PC-3 (cell line): ENCODE measurements at regions of chr3 and their contacts with region 1.

Region 1: GRCh38 chr3:146827836-146828235 is 222.7 kb upstream of the PLSCR5 start:
- DNase-seq: no peak
- ATAC-seq: no peak
- H3K4me3 ChIP-seq: no peak overlapping the region
- H3K27ac ChIP-seq: no peak overlapping the region
- H3K4me1 ChIP-seq: peaks cover 5% of the 10 kb centered on the region; the same call in 1 of the 2 replicates
- H3K27me3 ChIP-seq: peaks cover 36% of the 10 kb centered on the region
- CTCF ChIP-seq: no peak

Region 2: GRCh38 chr3:146621723-146622122 is 206.1 kb before region 1 on chr3:
- CTCF ChIA-PET with region 1: no interaction called
- POLR2A ChIA-PET with region 1: no interaction called
- intact Hi-C with region 1: no loop called
- DNase-seq: no peak
- ATAC-seq: no peak
- H3K4me3 ChIP-seq: no peak overlapping the region
- H3K27ac ChIP-seq: no peak overlapping the region
- H3K4me1 ChIP-seq: no peaks in the 10 kb centered on the region
- H3K27me3 ChIP-seq: no peaks in the 10 kb centered on the region
- CTCF ChIP-seq: no peak

Region 3: GRCh38 chr3:146845361-146845760 is 17.5 kb after region 1 on chr3:
- CTCF ChIA-PET with region 1: no interaction called
- POLR2A ChIA-PET with region 1: no interaction called
- intact Hi-C with region 1: loop called (anchors 2 kb)
- DNase-seq: no peak
- ATAC-seq: no peak
- H3K4me3 ChIP-seq: no peak overlapping the region
- H3K27ac ChIP-seq: no peak overlapping the region
- H3K4me1 ChIP-seq: no peaks in the 10 kb centered on the region
- H3K27me3 ChIP-seq: peaks cover 72% of the 10 kb centered on the region
- CTCF ChIP-seq: no peak

Region 4: GRCh38 chr3:146895026-146895749 is 67.4 kb after region 1 on chr3:
- CTCF ChIA-PET with region 1: no interaction called
- POLR2A ChIA-PET with region 1: no interaction called
- intact Hi-C with region 1: no loop called
- DNase-seq: no peak
- ATAC-seq: no peak
- H3K4me3 ChIP-seq: no peak overlapping the region
- H3K27ac ChIP-seq: no peak overlapping the region
- H3K4me1 ChIP-seq: no peaks in the 10 kb centered on the region
- H3K27me3 ChIP-seq: peaks cover 28% of the 10 kb centered on the region
- CTCF ChIP-seq: no peak

Region 5: DNA sequence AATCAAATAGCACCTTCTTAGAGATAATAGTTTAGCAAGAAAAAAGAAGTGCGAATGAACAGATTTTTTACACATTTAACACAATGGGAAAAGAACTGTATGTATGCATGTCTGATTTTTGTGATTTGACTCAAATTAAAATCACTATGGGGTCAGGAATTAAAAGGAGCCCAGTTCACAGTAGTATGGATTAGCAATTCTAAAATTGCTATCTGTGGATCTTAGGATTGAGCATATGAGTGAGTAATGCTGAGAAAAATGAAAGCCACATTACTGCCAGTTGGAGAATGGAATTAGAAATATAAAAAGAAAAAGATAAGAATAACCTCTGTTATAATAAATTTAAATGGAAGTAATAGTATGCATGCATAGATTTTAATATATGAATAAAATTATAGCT is 164.1 kb after region 1 on chr3:
- CTCF ChIA-PET with region 1: no interaction called
- POLR2A ChIA-PET with region 1: no interaction called
- intact Hi-C with region 1: no loop called
- DNase-seq: no peak
- ATAC-seq: no peak
- H3K4me3 ChIP-seq: no peak overlapping the region
- H3K27ac ChIP-seq: no peak overlapping the region
- H3K4me1 ChIP-seq: no peaks in the 10 kb centered on the region
- H3K27me3 ChIP-seq: no peaks in the 10 kb centered on the region
- CTCF ChIP-seq: no peak